OCI-LY7 (cell line): ENCODE measurements at regions of chr11 and their contacts with region 1.

Region 1: DNA sequence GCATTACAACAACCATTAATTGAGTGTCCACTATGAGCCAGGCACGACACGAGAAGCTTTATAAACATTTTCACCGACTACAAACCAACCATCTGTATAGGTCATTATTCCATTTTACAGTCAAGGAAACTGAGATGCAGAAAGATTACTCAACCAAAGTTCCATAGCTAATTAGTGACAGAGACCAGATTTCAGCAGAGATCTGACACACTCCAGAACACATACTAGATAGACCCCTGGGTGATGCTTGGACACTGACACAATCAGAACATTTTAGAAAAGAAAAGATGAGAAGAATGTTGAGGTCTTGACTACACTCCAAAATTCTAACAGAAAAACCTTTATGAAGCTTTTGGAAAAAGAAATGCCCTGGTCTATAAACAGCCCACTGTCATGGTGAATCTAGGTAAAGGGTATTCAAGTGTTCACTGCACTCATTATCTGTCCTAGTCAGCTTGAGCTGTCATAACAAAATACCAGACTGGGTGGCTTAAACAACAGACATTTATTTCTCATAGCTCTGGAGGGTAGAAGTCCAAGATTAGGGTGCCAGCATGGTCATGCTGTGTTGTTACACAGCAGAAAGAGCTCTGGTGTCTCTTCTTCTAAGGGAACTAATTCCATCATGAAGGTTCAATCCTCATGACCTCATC is 89.0 kb downstream of the RELT start:
- DNase-seq: no peak
- H3K4me3 ChIP-seq: no peak overlapping the region
- H3K27ac ChIP-seq: no peak overlapping the region
- H3K4me1 ChIP-seq: no peaks in the 10 kb centered on the region
- CTCF ChIP-seq: no peak

Region 2: GRCh38 chr11:73342633-73343032 is 122.5 kb before region 1 on chr11:
- CTCF ChIA-PET with region 1: no interaction called
- POLR2A ChIA-PET with region 1: no interaction called
- intact Hi-C with region 1: no loop called
- DNase-seq: no peak
- H3K4me3 ChIP-seq: no peak overlapping the region
- H3K27ac ChIP-seq: no peak overlapping the region
- H3K4me1 ChIP-seq: peaks cover 4% of the 10 kb centered on the region
- CTCF ChIP-seq: no peak

Region 3: DNA sequence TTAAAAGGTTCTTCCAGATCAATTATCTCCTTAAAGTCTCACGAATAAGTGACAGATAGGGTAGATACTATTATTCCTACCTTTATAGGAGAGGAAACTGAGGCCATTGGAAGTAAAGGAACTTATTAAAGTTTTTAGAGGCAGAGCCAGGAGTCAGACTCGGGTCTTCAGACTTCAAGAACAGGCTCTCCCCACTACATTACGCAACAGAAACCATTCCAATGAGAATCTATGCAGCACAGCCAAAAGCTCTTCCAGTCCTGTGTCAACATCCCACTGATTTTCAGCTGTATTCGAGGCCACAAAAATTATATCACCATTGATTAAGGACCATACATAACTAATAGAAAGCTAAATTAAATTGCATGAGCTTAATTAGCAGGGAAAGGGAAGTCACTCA is 11.6 kb before region 1 on chr11:
- CTCF ChIA-PET with region 1: interaction called, 3 read pairs
- POLR2A ChIA-PET with region 1: interaction called, 10 read pairs
- intact Hi-C with region 1: no loop called
- DNase-seq: no peak
- H3K4me3 ChIP-seq: no peak overlapping the region
- H3K27ac ChIP-seq: no peak overlapping the region
- H3K4me1 ChIP-seq: no peaks in the 10 kb centered on the region
- CTCF ChIP-seq: no peak

Region 4: DNA sequence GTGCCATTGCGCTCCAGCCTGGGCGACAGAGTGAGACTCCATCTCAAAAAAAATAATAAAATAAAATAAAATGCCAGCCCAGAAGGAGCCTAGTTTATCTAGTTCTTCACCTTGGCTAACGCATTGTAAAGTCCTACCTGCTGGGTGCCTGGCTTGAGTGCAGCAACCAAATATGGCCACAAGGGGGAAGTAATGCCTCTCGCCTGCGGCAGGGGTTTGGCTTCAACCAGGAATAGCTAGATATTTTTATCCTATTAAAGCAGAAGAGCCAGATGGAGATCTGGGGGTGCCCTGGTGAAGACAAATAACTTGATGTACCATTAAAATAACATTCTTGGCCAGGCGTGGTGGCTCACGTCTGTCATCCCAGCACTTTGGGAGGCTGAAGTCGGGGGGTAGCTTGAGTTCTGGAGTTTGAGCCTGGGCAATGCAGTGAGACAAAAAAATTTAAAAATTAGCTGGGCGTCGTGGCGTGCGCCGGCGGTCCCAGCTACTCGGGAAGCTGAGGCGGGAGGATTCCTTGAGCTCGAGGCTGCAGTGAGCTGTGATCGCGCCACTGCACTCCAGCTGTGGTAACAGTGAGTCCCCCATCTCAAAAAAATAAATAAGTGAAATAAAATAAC is 160.7 kb after region 1 on chr11:
- CTCF ChIA-PET with region 1: no interaction called
- POLR2A ChIA-PET with region 1: no interaction called
- intact Hi-C with region 1: no loop called
- DNase-seq: peak; percentile 73
- H3K4me3 ChIP-seq: no peak overlapping the region
- H3K27ac ChIP-seq: no peak overlapping the region
- H3K4me1 ChIP-seq: no peaks in the 10 kb centered on the region
- CTCF ChIP-seq: peak; percentile 88